ENCODE measurements at regions of chr6 and their contacts with region 1.

Region 1: GRCh38 chr6:903761-904160 is 210.8 kb upstream of the EXOC2 start:
- DNase-seq: no peak
- H3K4me3 Mint-ChIP-seq: no peak overlapping the region
- H3K27ac Mint-ChIP-seq: no peak overlapping the region
- H3K4me1 Mint-ChIP-seq: no peaks in the 10 kb centered on the region
- H3K27me3 Mint-ChIP-seq: peaks cover 6% of the 10 kb centered on the region

Region 2: GRCh38 chr6:736657-737446 is 166.9 kb before region 1 on chr6:
- intact Hi-C with region 1: loop called (anchors 5 kb)
- DNase-seq: no peak
- H3K4me3 Mint-ChIP-seq: no peak overlapping the region
- H3K27ac Mint-ChIP-seq: no peak overlapping the region
- H3K4me1 Mint-ChIP-seq: peaks cover 5% of the 10 kb centered on the region
- H3K27me3 Mint-ChIP-seq: peaks cover 20% of the 10 kb centered on the region

Region 3: GRCh38 chr6:1123386-1124375 is 219.9 kb after region 1 on chr6:
- intact Hi-C with region 1: no loop called
- DNase-seq: no peak
- H3K4me3 Mint-ChIP-seq: no peak overlapping the region
- H3K27ac Mint-ChIP-seq: no peak overlapping the region
- H3K4me1 Mint-ChIP-seq: no peaks in the 10 kb centered on the region
- H3K27me3 Mint-ChIP-seq: no peaks in the 10 kb centered on the region

Measured in activated T-helper 1 cell treated with anti-CD3 and anti-CD28 coated beads, Interleukin-12 subunit alpha, Interleukin-12 subunit beta, Interleukin-2, Interleukin-4 antibody, amounts not matched to agents 30 ng/mL and 10 ng/mL and 1 ng/mL, durations not matched to agents 14 hours and 24 hours and 36 hours (primary cell).